Activated naive CD4-positive, alpha-beta T cell treated with anti-CD3 and anti-CD28 coated beads for 36 hours (primary cell): ENCODE measurements at regions of chr14 and their contacts with region 1.

Region 1: DNA sequence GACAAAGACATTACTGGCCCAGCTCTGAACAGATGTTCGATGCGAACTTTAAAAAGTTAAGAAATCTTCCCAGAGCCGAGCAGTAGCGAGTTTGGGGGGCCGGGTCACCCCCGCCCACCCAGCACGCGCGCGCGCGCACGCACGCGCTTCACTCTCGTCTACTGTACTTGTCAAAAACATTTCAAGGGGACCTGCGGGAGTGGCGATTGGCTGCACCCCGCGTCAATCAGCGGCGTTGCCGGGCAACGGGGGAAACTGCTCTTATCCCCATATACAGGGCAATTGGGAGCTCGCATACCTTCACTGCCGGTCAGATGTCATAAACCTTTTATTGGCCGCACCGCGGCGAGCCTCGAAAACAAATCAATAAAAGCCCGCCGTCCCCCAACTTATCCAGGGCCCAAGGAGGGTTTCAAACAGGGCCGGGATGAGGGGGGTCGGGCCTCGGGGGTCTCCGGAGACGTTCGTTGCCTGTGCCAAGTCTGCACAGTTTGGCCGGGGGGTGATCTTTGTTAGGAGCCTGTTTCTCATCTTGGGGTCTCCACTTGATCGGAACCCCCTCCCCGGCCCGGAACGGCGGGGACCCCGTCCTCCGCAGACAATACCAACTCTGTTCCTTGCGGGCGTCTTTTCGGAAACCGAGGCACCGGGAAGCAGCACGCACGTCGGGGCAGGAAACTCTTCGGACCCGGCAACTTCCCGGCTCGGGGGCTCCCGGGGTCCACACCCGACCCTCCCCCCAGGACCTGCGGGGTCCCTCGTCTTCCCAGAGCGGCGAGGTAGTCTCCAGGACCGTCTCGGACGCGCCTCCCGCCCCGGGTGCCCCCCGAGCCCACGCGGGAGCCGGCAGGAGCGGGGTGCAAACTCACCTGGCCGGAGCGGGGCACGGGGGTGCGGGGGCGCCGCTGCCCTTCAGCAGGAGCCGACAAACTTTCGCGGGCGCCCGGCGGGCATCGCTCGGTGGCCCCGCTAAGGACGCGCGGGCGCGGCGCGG is 734 bp downstream of the FOXN3 start:
- DNase-seq: peak; percentile 98
- H3K4me3 Mint-ChIP-seq: peak overlapping the region; percentile 83
- H3K27ac Mint-ChIP-seq: peak overlapping the region; percentile 87
- H3K4me1 Mint-ChIP-seq: peaks cover 53% of the 10 kb centered on the region
- H3K27me3 Mint-ChIP-seq: no peaks in the 10 kb centered on the region

Region 2: DNA sequence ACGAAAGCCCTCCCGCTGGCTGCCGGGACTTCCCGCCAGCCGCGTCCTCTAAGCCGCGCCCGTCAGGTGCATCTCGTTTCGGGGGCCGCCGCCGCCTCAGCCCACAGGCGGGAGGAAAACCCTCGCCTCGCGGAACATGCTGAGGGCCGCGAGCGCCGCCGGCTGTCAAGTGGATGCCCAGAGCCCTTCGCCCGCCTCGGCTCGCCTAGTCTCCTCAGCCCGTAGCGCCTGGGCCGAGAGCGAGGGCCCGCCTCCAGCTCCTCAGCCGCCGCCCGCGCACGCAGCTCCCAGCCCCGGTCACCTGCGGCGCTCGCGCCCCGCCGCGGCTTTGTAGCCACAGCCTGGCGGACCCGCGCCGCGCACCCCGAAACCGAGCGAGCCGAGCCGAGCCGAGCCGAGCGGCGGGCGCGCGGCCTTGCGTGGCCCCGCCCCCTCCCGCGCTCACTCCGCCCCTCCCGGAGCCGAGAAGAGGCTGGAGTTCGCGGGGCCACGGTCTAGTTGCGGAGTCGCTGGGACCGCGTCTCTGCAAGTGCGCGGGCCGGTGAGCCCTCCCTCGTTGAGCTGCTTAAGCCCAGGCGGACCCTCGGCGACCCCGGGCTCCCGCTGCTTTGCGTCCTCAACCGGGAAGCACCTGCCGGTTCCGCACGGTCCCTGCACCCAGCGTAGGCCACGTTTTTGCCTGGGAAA is 623.6 kb before region 1 on chr14 and contains the start of gene EML5:
- CTCF ChIA-PET with region 1: no interaction called
- intact Hi-C with region 1: loop called (anchors 5 kb)
- DNase-seq: peak; percentile 86
- H3K4me3 Mint-ChIP-seq: peak within 1 kb of the TSS; percentile 88
- H3K27ac Mint-ChIP-seq: peak within 1 kb of the TSS; percentile 71
- H3K4me1 Mint-ChIP-seq: peaks cover 18% of the 10 kb centered on the region
- H3K27me3 Mint-ChIP-seq: no peaks in the 10 kb centered on the region
- total RNA-seq, gene EML5: 3.7 to 3.8 TPM

Region 3: GRCh38 chr14:89040460-89041259 is 375.6 kb before region 1 on chr14:
- CTCF ChIA-PET with region 1: interaction called, 3 read pairs
- intact Hi-C with region 1: loop called (anchors 1 kb)
- DNase-seq: peak; percentile 91
- H3K4me3 Mint-ChIP-seq: peak overlapping the region; percentile 70
- H3K27ac Mint-ChIP-seq: no peak overlapping the region
- H3K4me1 Mint-ChIP-seq: peaks cover 12% of the 10 kb centered on the region
- H3K27me3 Mint-ChIP-seq: peaks cover 8% of the 10 kb centered on the region

Region 4: GRCh38 chr14:89303457-89304435 is 112.6 kb before region 1 on chr14:
- CTCF ChIA-PET with region 1: no interaction called
- intact Hi-C with region 1: loop called (anchors 1 kb)
- DNase-seq: peak; percentile 61
- H3K4me3 Mint-ChIP-seq: peak overlapping the region; percentile 62
- H3K27ac Mint-ChIP-seq: peak overlapping the region; percentile 92
- H3K4me1 Mint-ChIP-seq: peaks cover 67% of the 10 kb centered on the region
- H3K27me3 Mint-ChIP-seq: no peaks in the 10 kb centered on the region

Region 5: DNA sequence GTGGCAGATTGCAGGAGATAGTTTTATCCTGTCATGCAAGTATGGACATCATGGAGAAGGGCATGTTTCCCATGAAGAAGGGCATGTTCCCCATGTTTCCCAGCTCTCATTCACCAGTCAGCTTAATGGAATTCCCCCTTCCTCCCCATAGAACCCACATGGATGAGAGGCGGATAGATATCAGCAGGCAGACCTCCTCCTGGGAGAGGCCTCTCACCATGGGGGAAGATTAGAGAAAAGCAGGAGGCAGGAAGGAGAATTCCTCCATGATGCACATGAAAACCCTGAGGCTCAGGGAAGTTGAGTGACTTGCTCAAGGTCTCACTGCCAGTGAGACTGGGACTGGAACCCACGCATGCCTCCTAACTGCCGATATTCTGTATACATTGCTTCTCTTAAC is 93.6 kb after region 1 on chr14:
- CTCF ChIA-PET with region 1: no interaction called
- intact Hi-C with region 1: loop called (anchors 2 kb)
- DNase-seq: no peak
- H3K4me3 Mint-ChIP-seq: peak overlapping the region; percentile 79
- H3K27ac Mint-ChIP-seq: peak overlapping the region; percentile 93
- H3K4me1 Mint-ChIP-seq: peaks cover 70% of the 10 kb centered on the region
- H3K27me3 Mint-ChIP-seq: no peaks in the 10 kb centered on the region

Region 6: GRCh38 chr14:89767861-89768268 is 351.6 kb after region 1 on chr14:
- CTCF ChIA-PET with region 1: no interaction called
- intact Hi-C with region 1: loop called (anchors 1 kb)
- DNase-seq: peak; percentile 86
- H3K4me3 Mint-ChIP-seq: peak overlapping the region; percentile 26
- H3K27ac Mint-ChIP-seq: peak overlapping the region; percentile 74
- H3K4me1 Mint-ChIP-seq: peaks cover 31% of the 10 kb centered on the region
- H3K27me3 Mint-ChIP-seq: no peaks in the 10 kb centered on the region